Pancreas (tissue), 10 donors: ENCODE measurements at regions of chr5 and their contacts with region 1.

Region 1: GRCh38 chr5:140151730-140152597 is 23.0 kb upstream of the CYSTM1 start:
- DNase-seq: no peak
- ATAC-seq: no peak
- H3K4me3 ChIP-seq: no peak overlapping the region
- H3K27ac ChIP-seq: no peak overlapping the region
- H3K4me1 ChIP-seq: peaks cover 0 to 6% (median 0%) of the 10 kb centered on the region in 3 donors
- H3K27me3 ChIP-seq: no peaks in the 10 kb centered on the region
- CTCF ChIP-seq: no peak

Region 2: GRCh38 chr5:140060816-140061215 is 91.1 kb before region 1 on chr5:
- intact Hi-C with region 1: no loop called
- DNase-seq: no peak
- ATAC-seq: no peak
- H3K4me3 ChIP-seq: no peak overlapping the region
- H3K27ac ChIP-seq: no peak overlapping the region
- H3K4me1 ChIP-seq: peaks cover 0 to 3% (median 0%) of the 10 kb centered on the region in 3 donors
- H3K27me3 ChIP-seq: peaks cover 0 to 3% (median 0%) of the 10 kb centered on the region in 4 donors
- CTCF ChIP-seq: no peak

Region 3: GRCh38 chr5:140084541-140084940 is 67.4 kb before region 1 on chr5:
- intact Hi-C with region 1: loop called in 2 of 3 experiments (anchors 5 kb)
- DNase-seq: peak in 2 of 6 donors; percentile 13 to 39
- ATAC-seq: peak in 3 of 4 donors; percentile 40 to 85 (median 81)
- H3K4me3 ChIP-seq: no peak overlapping the region
- H3K27ac ChIP-seq: no peak overlapping the region
- H3K4me1 ChIP-seq: peaks cover 0 to 6% (median 0%) of the 10 kb centered on the region in 3 donors
- H3K27me3 ChIP-seq: no peaks in the 10 kb centered on the region
- CTCF ChIP-seq: no peak

Region 4: DNA sequence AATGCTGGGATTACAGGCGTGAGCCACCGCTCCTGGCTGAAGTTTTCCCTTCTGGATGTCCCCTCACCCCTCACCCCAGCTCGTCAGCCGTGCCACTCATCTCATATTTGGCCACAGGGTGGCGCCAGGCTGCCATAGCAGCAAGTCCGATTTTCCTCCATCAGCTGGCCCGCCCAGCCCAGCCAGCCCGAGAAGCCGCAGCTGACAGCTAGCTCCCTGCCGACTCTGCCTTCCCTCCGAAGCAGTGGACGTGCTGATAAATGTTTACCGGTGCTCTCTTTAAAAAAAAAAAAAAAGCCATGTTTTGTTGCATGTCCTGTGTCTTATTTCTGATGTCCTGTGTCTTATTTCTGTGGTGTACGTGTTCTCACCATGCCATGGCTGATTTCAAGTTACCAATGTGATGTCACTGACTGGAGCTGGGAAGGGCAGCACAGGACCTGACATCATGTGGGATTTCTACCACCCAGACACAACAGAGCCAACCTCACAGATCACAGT is 92.6 kb after region 1 on chr5:
- intact Hi-C with region 1: no loop called
- DNase-seq: peak; percentile 86 to 96 (median 92)
- ATAC-seq: peak; percentile 75 to 86 (median 80)
- H3K4me3 ChIP-seq: no peak overlapping the region
- H3K27ac ChIP-seq: no peak overlapping the region
- H3K4me1 ChIP-seq: peaks cover 24 to 38% (median 29%) of the 10 kb centered on the region in 3 donors
- H3K27me3 ChIP-seq: no peaks in the 10 kb centered on the region
- CTCF ChIP-seq: peak; percentile 76 to 81 (median 77)